Activated CD4-positive, alpha-beta T cell treated with anti-CD3 and anti-CD28 coated beads for 36 hours (primary cell): ENCODE measurements at regions of chr12 and their contacts with region 1.

Region 1: GRCh38 chr12:77010691-77011548 is 54.4 kb downstream of the E2F7 start:
- DNase-seq: peak; percentile 85
- ATAC-seq: peak; percentile 80
- H3K4me3 Mint-ChIP-seq: no peak overlapping the region
- H3K27ac Mint-ChIP-seq: no peak overlapping the region
- H3K4me1 Mint-ChIP-seq: peaks cover 4% of the 10 kb centered on the region
- H3K27me3 Mint-ChIP-seq: peaks cover 8% of the 10 kb centered on the region

Region 2: GRCh38 chr12:76621582-76622024 is 389.3 kb before region 1 on chr12:
- CTCF ChIA-PET with region 1: interaction called, 27 read pairs
- POLR2A ChIA-PET with region 1: no interaction called
- intact Hi-C with region 1: loop called (anchors 1 kb)
- DNase-seq: peak; percentile 81
- ATAC-seq: peak; percentile 84
- H3K4me3 Mint-ChIP-seq: no peak overlapping the region
- H3K27ac Mint-ChIP-seq: no peak overlapping the region
- H3K4me1 Mint-ChIP-seq: peaks cover 5% of the 10 kb centered on the region
- H3K27me3 Mint-ChIP-seq: no peaks in the 10 kb centered on the region

Region 3: DNA sequence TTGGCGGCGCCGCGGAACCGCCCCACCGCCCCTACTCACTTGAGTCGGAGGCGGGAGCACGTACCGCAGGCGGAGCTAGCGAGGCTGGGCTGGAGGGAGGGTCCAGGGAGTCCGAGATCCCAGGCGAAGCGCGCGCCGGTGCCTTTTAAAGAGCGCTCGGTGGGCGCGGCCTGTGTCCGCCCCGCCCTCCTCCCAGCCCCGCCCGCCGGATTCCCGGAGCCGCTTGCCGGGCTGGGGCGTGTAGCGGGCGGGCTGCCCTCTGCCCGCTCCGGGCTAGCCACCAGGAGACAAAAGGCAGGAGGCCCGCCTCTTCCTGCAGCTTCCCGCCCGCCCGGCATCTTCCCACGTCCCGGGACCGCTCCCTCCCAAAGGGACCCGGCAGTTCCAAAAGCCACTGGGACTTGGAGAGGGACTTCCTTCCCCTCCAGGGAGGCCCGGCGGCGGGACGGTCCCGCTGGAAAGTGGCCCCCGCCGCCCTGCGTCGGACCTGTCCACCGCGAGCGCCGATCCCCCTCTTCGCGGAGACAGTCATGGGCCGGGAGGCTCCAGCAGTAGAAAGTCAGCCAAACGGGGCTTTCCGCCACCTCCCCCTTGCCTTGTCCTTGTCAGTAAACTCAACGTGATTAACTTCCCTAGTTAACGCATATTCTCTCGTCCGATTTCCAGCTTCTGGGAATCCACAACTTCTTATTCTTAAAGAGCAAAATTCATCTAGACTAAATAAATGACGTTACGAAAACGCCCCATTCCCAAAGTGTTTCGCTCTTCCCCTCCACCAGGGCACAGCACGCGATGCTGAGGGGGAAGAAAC is 131.8 kb before region 1 on chr12 and contains the start of gene CSRP2:
- CTCF ChIA-PET with region 1: interaction called, 3 read pairs
- POLR2A ChIA-PET with region 1: no interaction called
- intact Hi-C with region 1: loop called in 1 of 2 experiments (anchors 10 kb)
- DNase-seq: peak; percentile 86
- ATAC-seq: peak; percentile 95
- H3K4me3 Mint-ChIP-seq: peak within 1 kb of the TSS; percentile 76
- H3K27ac Mint-ChIP-seq: peak within 1 kb of the TSS; percentile 23
- H3K4me1 Mint-ChIP-seq: peaks cover 14% of the 10 kb centered on the region
- H3K27me3 Mint-ChIP-seq: peaks cover 37% of the 10 kb centered on the region
- total RNA-seq, gene CSRP2: 1.8 to 2.0 TPM

Region 4: GRCh38 chr12:76898442-76898841 is 112.5 kb before region 1 on chr12:
- CTCF ChIA-PET with region 1: no interaction called
- POLR2A ChIA-PET with region 1: no interaction called
- intact Hi-C with region 1: no loop called
- DNase-seq: no peak
- ATAC-seq: no peak
- H3K4me3 Mint-ChIP-seq: no peak overlapping the region
- H3K27ac Mint-ChIP-seq: no peak overlapping the region
- H3K4me1 Mint-ChIP-seq: peaks cover 12% of the 10 kb centered on the region
- H3K27me3 Mint-ChIP-seq: no peaks in the 10 kb centered on the region

Region 5: DNA sequence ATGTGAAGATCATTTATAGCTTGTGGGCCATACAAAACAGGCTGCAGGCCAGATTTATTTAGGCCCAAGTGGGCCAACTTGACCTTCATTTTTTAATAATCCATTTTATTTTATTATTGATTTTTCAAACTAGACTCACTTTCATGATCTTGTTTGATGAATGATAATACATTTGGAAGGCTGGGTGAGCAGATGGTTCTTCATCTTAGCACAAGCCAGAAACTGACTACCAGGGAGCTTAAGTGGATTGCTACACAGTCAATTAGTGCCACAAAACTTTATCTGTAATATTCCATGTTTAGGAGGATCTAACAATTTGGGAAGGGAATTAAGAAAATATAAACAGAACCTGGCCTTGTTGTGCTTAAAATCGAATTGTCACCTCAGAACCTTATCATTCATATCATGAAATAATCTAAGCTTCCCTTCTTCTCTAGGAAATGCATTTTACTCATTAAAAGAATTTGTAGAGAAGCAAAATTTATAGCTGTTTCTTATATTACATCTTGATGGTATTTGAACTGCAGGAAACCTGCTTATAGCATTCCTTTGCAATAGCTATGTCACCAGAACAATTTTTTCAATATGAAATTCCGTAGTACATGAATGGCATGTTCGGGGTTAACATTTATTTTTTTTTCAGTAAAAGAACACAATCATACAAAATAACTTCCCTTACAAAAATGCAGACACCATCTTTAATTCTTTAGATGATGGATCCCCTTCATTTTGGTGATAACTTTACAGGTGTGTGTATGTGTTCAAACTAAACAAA is 70.1 kb before region 1 on chr12:
- CTCF ChIA-PET with region 1: interaction called, 11 read pairs
- POLR2A ChIA-PET with region 1: no interaction called
- intact Hi-C with region 1: no loop called
- DNase-seq: no peak
- ATAC-seq: no peak
- H3K4me3 Mint-ChIP-seq: no peak overlapping the region
- H3K27ac Mint-ChIP-seq: no peak overlapping the region
- H3K4me1 Mint-ChIP-seq: no peaks in the 10 kb centered on the region
- H3K27me3 Mint-ChIP-seq: no peaks in the 10 kb centered on the region

Region 6: DNA sequence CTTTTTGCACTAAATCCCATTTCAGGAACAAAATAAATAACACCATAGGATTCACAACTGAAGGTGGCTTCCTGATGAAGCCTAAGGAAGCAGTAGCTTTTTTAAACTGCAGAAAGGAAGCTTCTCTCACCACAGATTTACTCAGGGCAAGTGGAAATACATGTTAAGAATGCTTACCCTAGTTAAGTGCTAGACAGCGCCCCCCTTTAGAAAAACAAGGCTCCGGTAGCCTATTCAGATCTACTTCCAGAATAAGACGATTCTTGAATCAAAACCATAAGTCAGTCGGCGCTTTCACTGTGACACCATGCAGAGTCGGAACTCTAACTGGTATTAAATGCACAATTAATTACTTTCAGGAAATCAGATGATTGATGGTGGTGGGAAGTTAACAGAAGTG is 12.6 kb after region 1 on chr12:
- CTCF ChIA-PET with region 1: interaction called, 24 read pairs
- POLR2A ChIA-PET with region 1: interaction called, 3 read pairs
- intact Hi-C with region 1: no loop called
- DNase-seq: no peak
- ATAC-seq: no peak
- H3K4me3 Mint-ChIP-seq: no peak overlapping the region
- H3K27ac Mint-ChIP-seq: no peak overlapping the region
- H3K4me1 Mint-ChIP-seq: no peaks in the 10 kb centered on the region
- H3K27me3 Mint-ChIP-seq: no peaks in the 10 kb centered on the region

Region 7: GRCh38 chr12:77608271-77608824 is 597.4 kb after region 1 on chr12:
- CTCF ChIA-PET with region 1: no interaction called
- POLR2A ChIA-PET with region 1: no interaction called
- intact Hi-C with region 1: no loop called
- DNase-seq: no peak
- ATAC-seq: no peak
- H3K4me3 Mint-ChIP-seq: no peak overlapping the region
- H3K27ac Mint-ChIP-seq: no peak overlapping the region
- H3K4me1 Mint-ChIP-seq: no peaks in the 10 kb centered on the region
- H3K27me3 Mint-ChIP-seq: no peaks in the 10 kb centered on the region